ENCODE measurements at regions of chr3 and their contacts with region 1.

Region 1: DNA sequence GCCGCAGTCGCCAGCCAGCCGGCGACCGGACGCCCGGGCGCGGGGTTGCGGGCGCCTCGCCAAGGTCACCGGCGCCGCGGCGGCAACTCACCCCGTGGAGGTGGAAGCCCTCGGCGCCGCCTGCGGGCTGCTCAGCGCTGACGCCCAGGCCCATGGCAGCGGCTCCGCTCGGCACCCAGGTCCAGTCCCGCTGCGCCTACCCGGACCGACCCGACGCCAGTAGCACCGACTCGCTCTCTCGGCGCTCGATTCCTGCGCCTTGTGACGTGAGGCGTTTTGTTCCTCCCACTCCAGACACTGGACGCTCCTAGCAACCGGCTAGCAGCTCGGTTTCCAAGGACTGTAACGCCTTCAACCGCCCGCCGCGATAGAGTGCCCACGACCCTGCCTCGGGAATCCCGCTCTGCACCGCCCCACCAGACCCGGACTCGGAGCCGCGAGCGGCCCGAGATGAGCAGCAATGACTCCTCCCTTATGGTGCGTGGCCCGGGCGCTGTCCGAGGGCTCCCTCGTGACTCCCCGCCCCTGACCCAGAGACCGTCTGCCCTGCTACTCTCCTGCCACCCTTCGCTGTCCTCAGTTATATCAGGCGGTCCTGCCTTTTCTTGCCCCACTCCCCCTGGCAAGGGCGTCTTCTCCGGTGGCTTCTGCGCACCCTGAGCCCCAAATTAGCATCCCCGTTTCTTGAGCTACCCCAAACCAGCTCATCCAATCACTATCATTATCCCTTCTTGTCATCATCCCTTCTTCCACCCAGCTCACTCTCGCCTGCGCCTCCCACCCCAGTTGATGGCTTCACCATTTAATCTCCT is at the starts of genes GORASP1 and TTC21A:
- DNase-seq: peak; percentile 58 to 87 (median 70)
- H3K4me3 ChIP-seq: peak within 1 kb of the TSS; percentile 67 to 71
- H3K4me3 Mint-ChIP-seq: peak within 1 kb of the TSS; percentile 87 to 99 (median 94)
- H3K27ac ChIP-seq: peak within 1 kb of the TSS; percentile 76
- H3K27ac Mint-ChIP-seq: peak within 1 kb of the TSS; percentile 88 to 99 (median 96)
- H3K4me1 ChIP-seq: peaks cover 45% of the 10 kb centered on the region
- H3K4me1 Mint-ChIP-seq: peaks cover 37 to 60% (median 49%) of the 10 kb centered on the region in 4 donors
- H3K27me3 ChIP-seq: no peaks in the 10 kb centered on the region
- H3K27me3 Mint-ChIP-seq: no peaks in the 10 kb centered on the region
- total RNA-seq, gene GORASP1: 57.1 to 58.4 TPM
- total RNA-seq, gene TTC21A: 3.0 to 3.9 TPM

Region 2: DNA sequence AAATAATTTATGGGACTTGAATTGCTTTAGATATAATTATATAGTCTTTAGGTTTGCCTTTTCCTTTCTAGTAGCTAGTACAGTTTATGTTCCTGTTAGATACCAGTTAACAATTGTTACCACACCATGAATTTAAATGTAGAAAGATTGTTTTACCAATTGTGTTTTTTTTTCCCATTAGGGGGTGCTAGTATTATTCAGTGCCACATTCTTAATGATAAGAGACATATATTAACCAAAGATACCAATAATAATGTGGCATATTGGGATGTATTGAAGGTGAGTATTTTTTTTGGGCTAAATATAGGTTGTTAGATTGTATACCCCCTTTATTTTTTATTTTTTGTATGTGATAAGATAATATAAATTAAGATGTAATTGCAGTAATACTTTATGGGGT is 28.1 kb before region 1 on chr3:
- CTCF ChIA-PET with region 1: no interaction called
- POLR2A ChIA-PET with region 1: no interaction called
- intact Hi-C with region 1: no loop called
- DNase-seq: no peak
- H3K4me3 ChIP-seq: no peak overlapping the region
- H3K4me3 Mint-ChIP-seq: no peak overlapping the region
- H3K27ac ChIP-seq: no peak overlapping the region
- H3K27ac Mint-ChIP-seq: peak overlapping the region in 1 of 7 donors; percentile 19
- H3K4me1 ChIP-seq: no peaks in the 10 kb centered on the region
- H3K4me1 Mint-ChIP-seq: peaks cover 0 to 13% (median 6%) of the 10 kb centered on the region in 4 donors
- H3K27me3 ChIP-seq: no peaks in the 10 kb centered on the region
- H3K27me3 Mint-ChIP-seq: no peaks in the 10 kb centered on the region

Region 3: GRCh38 chr3:39180546-39181346 is 73.2 kb after region 1 on chr3:
- CTCF ChIA-PET with region 1: interaction called, 3 read pairs
- POLR2A ChIA-PET with region 1: interaction called, 13 read pairs
- intact Hi-C with region 1: loop called (anchors 2 kb)
- DNase-seq: peak; percentile 89 to 93 (median 91)
- H3K4me3 ChIP-seq: peak overlapping the region; percentile 39 to 54
- H3K4me3 Mint-ChIP-seq: peak overlapping the region; percentile 79 to 92 (median 84)
- H3K27ac ChIP-seq: peak overlapping the region; percentile 67
- H3K27ac Mint-ChIP-seq: peak overlapping the region; percentile 68 to 99 (median 96)
- H3K4me1 ChIP-seq: peaks cover 38% of the 10 kb centered on the region
- H3K4me1 Mint-ChIP-seq: peaks cover 35 to 52% (median 37%) of the 10 kb centered on the region in 4 donors
- H3K27me3 ChIP-seq: no peaks in the 10 kb centered on the region
- H3K27me3 Mint-ChIP-seq: no peaks in the 10 kb centered on the region

Region 4: GRCh38 chr3:39361252-39361927 is 253.8 kb after region 1 on chr3:
- CTCF ChIA-PET with region 1: no interaction called
- POLR2A ChIA-PET with region 1: no interaction called
- intact Hi-C with region 1: no loop called
- DNase-seq: peak; percentile 56 to 80 (median 61)
- H3K4me3 ChIP-seq: peak overlapping the region in 1 of 2 donors; percentile 10
- H3K4me3 Mint-ChIP-seq: peak overlapping the region; percentile 41 to 81 (median 76)
- H3K27ac ChIP-seq: peak overlapping the region; percentile 17
- H3K27ac Mint-ChIP-seq: peak overlapping the region; percentile 73 to 93 (median 84)
- H3K4me1 ChIP-seq: peaks cover 46% of the 10 kb centered on the region
- H3K4me1 Mint-ChIP-seq: peaks cover 60 to 83% (median 70%) of the 10 kb centered on the region in 4 donors
- H3K27me3 ChIP-seq: no peaks in the 10 kb centered on the region
- H3K27me3 Mint-ChIP-seq: no peaks in the 10 kb centered on the region

Region 5: DNA sequence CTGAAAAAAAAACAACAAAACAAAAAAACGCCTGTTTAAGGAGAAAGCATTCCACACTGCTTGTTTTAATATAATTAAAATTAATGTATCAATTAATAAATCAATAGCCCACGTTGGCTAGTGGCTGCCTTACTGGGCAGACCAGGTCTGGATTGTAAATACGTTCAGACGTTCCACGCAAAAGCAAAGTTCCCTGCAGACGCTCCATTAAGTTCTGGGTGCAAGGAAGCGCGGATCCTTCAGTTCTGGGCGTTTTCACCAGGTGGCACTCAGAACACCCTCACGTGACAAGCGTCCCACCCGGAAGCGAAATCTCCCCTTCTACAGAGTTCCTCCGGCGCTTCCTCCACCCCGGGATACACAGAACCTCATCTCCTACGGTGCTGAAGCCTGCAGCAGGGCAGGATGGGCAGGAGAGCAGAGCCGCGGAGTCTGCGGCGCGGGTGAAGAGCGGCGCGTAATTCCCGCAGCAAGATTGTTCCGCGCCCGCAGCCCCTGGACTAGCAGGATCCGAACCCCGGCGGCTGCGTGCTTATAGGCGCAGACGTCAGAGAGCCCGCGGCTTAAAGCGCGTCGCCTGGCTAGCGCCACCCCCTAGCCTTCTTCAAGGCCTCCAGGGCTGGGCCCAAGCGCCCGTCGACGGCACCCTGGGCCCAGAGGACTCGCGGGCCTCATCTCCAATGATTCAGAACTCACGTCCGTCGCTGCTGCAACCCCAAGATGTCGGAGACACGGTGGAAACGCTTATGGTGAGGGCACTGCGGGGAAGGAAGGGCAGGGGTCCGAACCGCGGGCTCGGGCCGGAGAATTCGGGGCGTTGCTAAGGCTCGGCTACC is 275.7 kb after region 1 on chr3 and contains the start of gene SLC25A38:
- CTCF ChIA-PET with region 1: no interaction called
- POLR2A ChIA-PET with region 1: interaction called, 3 read pairs
- intact Hi-C with region 1: loop called (anchors 5 kb)
- DNase-seq: peak; percentile 82 to 90 (median 85)
- H3K4me3 ChIP-seq: peak within 1 kb of the TSS; percentile 91 to 92
- H3K4me3 Mint-ChIP-seq: peak within 1 kb of the TSS; percentile 96 to 100 (median 98)
- H3K27ac ChIP-seq: peak within 1 kb of the TSS; percentile 93
- H3K27ac Mint-ChIP-seq: peak within 1 kb of the TSS; percentile 97 to 100 (median 100)
- H3K4me1 ChIP-seq: peaks cover 46% of the 10 kb centered on the region
- H3K4me1 Mint-ChIP-seq: peaks cover 31 to 53% (median 44%) of the 10 kb centered on the region in 4 donors
- H3K27me3 ChIP-seq: no peaks in the 10 kb centered on the region
- H3K27me3 Mint-ChIP-seq: no peaks in the 10 kb centered on the region
- total RNA-seq, gene SLC25A38: 46.0 to 53.5 TPM